ENCODE measurements at regions of chr17 and their contacts with region 1.

Region 1: GRCh38 chr17:2336215-2336851 is at the start of gene TSR1:
- DNase-seq: peak; percentile 97
- H3K4me3 ChIP-seq: peak within 1 kb of the TSS; percentile 98 to 99
- H3K27ac ChIP-seq: peak within 1 kb of the TSS; percentile 80 to 94
- H3K4me1 ChIP-seq: peaks cover 6 to 17% of the 10 kb centered on the region in 2 experiments; a peak in 3 of 4 replicates
- H3K27me3 ChIP-seq: no peaks in the 10 kb centered on the region
- CTCF ChIP-seq: peak; percentile 27; the same call in 1 of the 2 replicates
- EP300 ChIP-seq: no peak
- RAD21 ChIP-seq: no peak
- polyA plus RNA-seq, gene TSR1: 26.7 and 29.0 TPM in 2 replicates

Region 2: DNA sequence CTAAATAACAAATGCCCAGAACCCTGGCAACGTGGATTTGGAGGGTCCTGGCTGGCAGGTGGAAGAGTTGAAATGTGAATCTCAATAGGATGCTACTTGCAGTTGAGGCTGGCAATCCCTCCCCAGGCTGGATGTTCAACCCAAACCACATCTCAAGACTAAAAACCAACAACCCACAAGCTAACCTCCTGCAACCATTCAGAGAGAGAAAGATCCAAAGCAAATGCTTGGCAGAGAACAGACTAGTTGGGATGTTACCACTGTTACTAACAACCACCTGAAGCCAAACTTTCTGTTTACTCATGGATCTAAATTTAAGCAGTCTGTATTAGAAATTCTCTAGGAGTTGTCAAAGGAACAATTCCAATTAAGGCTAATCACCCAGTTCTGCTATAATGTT is 60.6 kb before region 1 on chr17:
- CTCF ChIA-PET with region 1: no interaction called
- POLR2A ChIA-PET with region 1: no interaction called
- DNase-seq: no peak
- H3K4me3 ChIP-seq: no peak overlapping the region
- H3K27ac ChIP-seq: no peak overlapping the region
- H3K4me1 ChIP-seq: peaks cover 0 to 4% of the 10 kb centered on the region in 2 experiments; a peak in 1 of 4 replicates
- H3K27me3 ChIP-seq: no peaks in the 10 kb centered on the region
- CTCF ChIP-seq: no peak
- EP300 ChIP-seq: no peak
- RAD21 ChIP-seq: no peak

Region 3: DNA sequence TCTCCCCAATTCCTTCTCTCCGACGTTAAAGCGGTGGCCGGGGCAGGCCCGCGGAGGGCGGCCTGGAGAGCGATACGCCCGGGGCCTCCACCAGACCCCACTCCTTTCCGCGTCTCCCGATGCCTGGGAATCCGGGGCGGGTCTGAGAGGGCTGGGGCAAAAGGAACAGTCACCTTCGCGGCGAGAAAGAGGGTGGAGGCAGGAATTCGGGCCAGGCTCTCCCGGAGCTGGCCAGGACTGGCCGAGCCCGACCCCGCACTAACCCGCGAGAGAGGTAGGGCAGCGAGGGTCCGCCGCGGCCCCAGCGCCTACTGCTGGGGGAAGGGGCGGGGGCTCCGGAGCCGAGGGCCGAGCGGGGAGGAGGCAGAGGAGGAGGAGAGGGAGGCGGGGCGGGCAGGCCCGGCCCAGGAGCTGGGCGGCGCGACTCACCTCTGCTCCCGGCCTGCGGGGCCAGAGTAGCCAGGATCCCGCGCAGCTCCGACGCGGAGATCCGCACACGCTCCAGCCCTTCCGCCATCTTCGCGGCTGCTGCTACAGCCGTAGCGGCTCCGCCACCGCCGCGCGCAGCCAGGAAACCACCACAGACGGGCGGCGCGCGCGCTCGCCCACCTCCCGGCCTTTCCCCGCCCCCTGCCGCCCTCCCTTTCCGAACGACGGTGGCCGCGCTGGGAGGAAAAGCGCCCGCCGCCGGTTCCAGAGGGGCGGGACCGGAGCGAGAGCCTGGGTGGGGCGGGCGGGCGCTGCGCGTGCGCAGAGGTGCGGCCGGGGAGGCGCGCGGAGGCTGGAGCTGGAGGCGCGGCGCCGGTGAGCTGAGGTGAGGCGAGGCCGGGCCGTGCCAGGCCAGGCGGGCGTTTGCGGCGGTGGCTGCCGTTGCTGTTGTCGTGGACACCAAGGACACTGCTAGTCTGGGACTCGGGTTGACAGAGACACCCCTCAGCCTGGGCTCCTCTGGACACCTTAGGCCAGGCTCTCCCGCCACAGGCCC is 32.8 kb before region 1 on chr17 and contains the starts of genes SMG6 and SRR:
- CTCF ChIA-PET with region 1: interaction called, 5 read pairs
- POLR2A ChIA-PET with region 1: interaction called, 16 read pairs
- DNase-seq: peak; percentile 100
- H3K4me3 ChIP-seq: peak within 1 kb of the TSS; percentile 72 to 80
- H3K27ac ChIP-seq: peak within 1 kb of the TSS; percentile 82 to 95
- H3K4me1 ChIP-seq: peaks cover 5 to 6% of the 10 kb centered on the region in 2 experiments; a peak in 2 of 4 replicates
- H3K27me3 ChIP-seq: no peaks in the 10 kb centered on the region
- CTCF ChIP-seq: no peak
- EP300 ChIP-seq: no peak
- RAD21 ChIP-seq: no peak
- polyA plus RNA-seq, gene SMG6: 9.5 and 15.7 TPM in 2 replicates
- polyA plus RNA-seq, gene SRR: 18.5 and 20.2 TPM in 2 replicates

Region 4: DNA sequence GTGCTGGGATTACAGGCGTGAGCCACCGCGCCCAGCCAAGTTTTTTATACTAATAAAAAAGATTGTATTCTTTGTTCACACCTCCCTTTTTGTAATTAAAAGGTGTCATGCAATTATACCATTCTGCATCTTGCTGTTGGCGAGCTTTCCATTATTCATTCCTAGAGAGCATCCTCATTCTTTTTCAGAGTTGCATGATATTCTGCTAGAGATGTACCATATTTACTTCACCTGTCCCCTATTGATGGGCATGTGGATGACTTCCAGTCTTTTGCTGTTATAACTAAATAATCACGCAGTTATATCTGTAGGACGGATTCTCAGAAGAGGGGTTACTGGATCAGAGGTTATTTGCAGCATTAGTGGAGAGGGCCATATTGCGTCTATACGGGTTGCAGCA is 18.0 kb after region 1 on chr17:
- CTCF ChIA-PET with region 1: interaction called, 29 read pairs
- POLR2A ChIA-PET with region 1: interaction called, 4 read pairs
- DNase-seq: no peak
- H3K4me3 ChIP-seq: no peak overlapping the region
- H3K27ac ChIP-seq: no peak overlapping the region
- H3K4me1 ChIP-seq: peaks cover 2 to 10% of the 10 kb centered on the region in 2 experiments; a peak in 2 of 4 replicates
- H3K27me3 ChIP-seq: no peaks in the 10 kb centered on the region
- CTCF ChIP-seq: no peak
- EP300 ChIP-seq: no peak
- RAD21 ChIP-seq: no peak

Region 5: DNA sequence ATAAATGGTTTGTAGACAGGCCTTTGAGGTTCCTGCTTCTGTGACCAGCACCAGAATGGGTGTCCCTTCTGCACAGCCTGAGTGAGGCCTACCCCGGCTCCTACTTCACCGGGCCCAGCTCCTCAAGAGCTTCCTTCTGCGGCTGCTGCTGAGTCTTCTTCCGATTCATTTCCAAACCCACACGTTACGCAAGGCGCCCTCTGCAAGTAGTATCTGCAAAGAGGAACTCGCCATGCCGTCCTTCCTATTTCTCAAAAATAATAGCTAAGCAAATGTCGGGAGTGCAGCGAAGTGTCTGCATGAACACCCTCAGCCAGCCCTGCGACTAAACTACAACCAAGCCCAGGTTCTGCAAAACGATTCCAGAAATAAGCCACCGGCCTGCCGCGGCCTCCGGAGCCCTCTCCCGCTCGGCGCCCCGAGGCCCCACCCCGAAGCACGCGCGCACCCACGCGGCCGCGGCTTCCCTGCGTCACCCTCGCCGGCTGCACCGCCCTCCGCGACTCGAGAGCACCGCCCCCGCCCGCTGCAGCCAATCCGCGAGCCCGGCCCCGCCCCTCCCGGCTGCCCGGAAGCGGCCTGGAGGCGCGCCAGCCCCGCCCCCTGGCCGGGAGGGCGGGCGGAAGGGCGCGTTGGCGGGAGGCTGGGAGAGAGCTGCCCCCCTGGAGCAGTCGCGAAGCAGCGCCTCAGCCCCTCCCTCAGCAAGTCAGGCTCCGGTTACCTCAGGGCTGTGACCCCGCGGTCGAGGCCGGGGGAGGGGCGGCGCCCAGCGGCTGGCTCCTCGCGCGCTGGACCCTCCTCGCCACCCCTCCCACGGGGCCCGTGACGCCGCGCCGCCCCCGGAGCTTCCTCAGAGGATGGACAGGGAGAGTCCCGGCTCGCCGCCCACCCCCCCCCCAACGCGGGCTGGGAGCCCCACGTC is 56.2 kb after region 1 on chr17:
- CTCF ChIA-PET with region 1: interaction called, 3 read pairs
- POLR2A ChIA-PET with region 1: interaction called, 10 read pairs
- DNase-seq: peak; percentile 97
- H3K4me3 ChIP-seq: peak overlapping the region; percentile 66 to 79
- H3K27ac ChIP-seq: peak overlapping the region; percentile 98 to 99
- H3K4me1 ChIP-seq: peaks cover 26 to 45% of the 10 kb centered on the region in 2 experiments; a peak in 3 of 4 replicates
- H3K27me3 ChIP-seq: no peaks in the 10 kb centered on the region
- CTCF ChIP-seq: no peak
- EP300 ChIP-seq: no peak
- RAD21 ChIP-seq: no peak

Region 6: GRCh38 chr17:2438823-2439222 is 102.5 kb after region 1 on chr17:
- CTCF ChIA-PET with region 1: no interaction called
- POLR2A ChIA-PET with region 1: no interaction called
- DNase-seq: no peak
- H3K4me3 ChIP-seq: no peak overlapping the region
- H3K27ac ChIP-seq: peak overlapping the region in 1 of 2 experiments; percentile 23; a peak in 1 of 4 replicates
- H3K4me1 ChIP-seq: peaks cover 0 to 8% of the 10 kb centered on the region in 2 experiments; a peak in 1 of 4 replicates
- H3K27me3 ChIP-seq: no peaks in the 10 kb centered on the region
- CTCF ChIP-seq: no peak
- EP300 ChIP-seq: no peak
- RAD21 ChIP-seq: no peak